ENCODE measurements at regions of chr11 and their contacts with region 1.

Region 1: GRCh38 chr11:116927163-116927974 is 89.9 kb upstream of the APOA1 start:
- DNase-seq: no peak
- H3K4me3 ChIP-seq: no peak overlapping the region
- H3K27me3 ChIP-seq: no peaks in the 10 kb centered on the region
- CTCF ChIP-seq: peak; percentile 35

Region 2: GRCh38 chr11:116792869-116793771 is 134.2 kb before region 1 on chr11:
- CTCF ChIA-PET with region 1: no interaction called
- POLR2A ChIA-PET with region 1: interaction called, 20 read pairs
- DNase-seq: peak; percentile 31
- H3K4me3 ChIP-seq: no peak overlapping the region
- H3K27me3 ChIP-seq: no peaks in the 10 kb centered on the region
- CTCF ChIP-seq: no peak

Region 3: GRCh38 chr11:116946410-116946809 is 19.0 kb after region 1 on chr11:
- CTCF ChIA-PET with region 1: no interaction called
- POLR2A ChIA-PET with region 1: no interaction called
- DNase-seq: no peak
- H3K4me3 ChIP-seq: no peak overlapping the region
- H3K27me3 ChIP-seq: no peaks in the 10 kb centered on the region
- CTCF ChIP-seq: no peak

Region 4: DNA sequence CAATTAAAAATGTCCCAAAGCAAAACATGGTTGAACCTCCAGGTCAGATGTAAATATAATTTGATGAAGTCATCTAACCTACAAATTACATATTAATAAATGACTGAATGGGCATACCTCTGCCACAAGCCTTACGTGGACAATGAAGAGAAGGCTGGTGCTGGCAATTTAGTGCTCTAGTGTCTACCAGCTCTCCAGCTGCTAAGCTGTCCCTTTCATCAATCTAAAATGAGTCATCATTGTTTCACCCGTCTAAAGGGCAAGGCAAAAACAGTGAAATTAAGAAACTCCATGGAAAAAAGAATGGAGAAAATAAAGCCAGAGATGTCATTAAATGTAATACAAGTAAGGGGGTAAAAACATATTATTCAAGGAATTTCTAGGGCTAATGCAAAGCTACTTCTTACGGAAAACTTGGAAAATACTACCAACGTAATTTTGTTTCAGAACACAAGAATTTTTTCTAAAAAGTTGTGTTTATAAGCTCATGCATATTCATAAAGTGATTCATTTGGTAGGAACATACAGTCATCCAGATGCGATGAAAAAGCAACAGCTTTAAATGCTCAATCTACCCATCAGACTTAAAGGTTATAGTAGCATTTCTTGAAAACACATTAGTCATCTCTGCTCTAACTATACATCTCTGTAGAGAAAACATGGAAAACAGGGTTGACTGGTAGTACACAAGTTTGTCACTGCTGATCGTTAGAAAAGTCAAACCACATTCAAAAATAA is 99.4 kb after region 1 on chr11:
- CTCF ChIA-PET with region 1: no interaction called
- POLR2A ChIA-PET with region 1: interaction called, 10 read pairs
- DNase-seq: peak; percentile 31
- H3K4me3 ChIP-seq: no peak overlapping the region
- H3K27me3 ChIP-seq: no peaks in the 10 kb centered on the region
- CTCF ChIP-seq: no peak